ENCODE measurements at regions of chr7 and their contacts with region 1.

Region 1: GRCh38 chr7:31122649-31123058 is 70.5 kb downstream of the ADCYAP1R1 start:
- DNase-seq: peak; percentile 64
- ATAC-seq: peak; percentile 89
- H3K4me3 ChIP-seq: no peak overlapping the region
- H3K27ac ChIP-seq: no peak overlapping the region
- H3K4me1 ChIP-seq: no peaks in the 10 kb centered on the region
- H3K27me3 ChIP-seq: peaks cover 25% of the 10 kb centered on the region
- CTCF ChIP-seq: peak; percentile 95

Region 2: GRCh38 chr7:30938435-30939316 is 184.0 kb before region 1 on chr7:
- CTCF ChIA-PET with region 1: interaction called, 21 read pairs
- POLR2A ChIA-PET with region 1: no interaction called
- in situ Hi-C with region 1: no loop called
- intact Hi-C with region 1: loop called (anchors 5 kb)
- DNase-seq: peak; percentile 73
- ATAC-seq: peak; percentile 97
- H3K4me3 ChIP-seq: peak overlapping the region in 1 of 2 experiments; percentile 3; a peak in 1 of 4 replicates
- H3K27ac ChIP-seq: no peak overlapping the region
- H3K4me1 ChIP-seq: no peaks in the 10 kb centered on the region
- H3K27me3 ChIP-seq: peaks cover 29% of the 10 kb centered on the region
- CTCF ChIP-seq: peak; percentile 100

Region 3: GRCh38 chr7:30983042-30983913 is 139.4 kb before region 1 on chr7:
- CTCF ChIA-PET with region 1: interaction called, 187 read pairs
- POLR2A ChIA-PET with region 1: interaction called, 11 read pairs
- in situ Hi-C with region 1: no loop called
- intact Hi-C with region 1: loop called (anchors 1 kb)
- DNase-seq: peak; percentile 67
- ATAC-seq: peak; percentile 95
- H3K4me3 ChIP-seq: no peak overlapping the region
- H3K27ac ChIP-seq: no peak overlapping the region
- H3K4me1 ChIP-seq: 0 out of 2 replicates have a peak, but pooled peaks cover 3% of the 10 kb centered on the region
- H3K27me3 ChIP-seq: peaks cover 18% of the 10 kb centered on the region
- CTCF ChIP-seq: peak; percentile 96